ENCODE measurements at regions of chr9 and their contacts with region 1.

Region 1: DNA sequence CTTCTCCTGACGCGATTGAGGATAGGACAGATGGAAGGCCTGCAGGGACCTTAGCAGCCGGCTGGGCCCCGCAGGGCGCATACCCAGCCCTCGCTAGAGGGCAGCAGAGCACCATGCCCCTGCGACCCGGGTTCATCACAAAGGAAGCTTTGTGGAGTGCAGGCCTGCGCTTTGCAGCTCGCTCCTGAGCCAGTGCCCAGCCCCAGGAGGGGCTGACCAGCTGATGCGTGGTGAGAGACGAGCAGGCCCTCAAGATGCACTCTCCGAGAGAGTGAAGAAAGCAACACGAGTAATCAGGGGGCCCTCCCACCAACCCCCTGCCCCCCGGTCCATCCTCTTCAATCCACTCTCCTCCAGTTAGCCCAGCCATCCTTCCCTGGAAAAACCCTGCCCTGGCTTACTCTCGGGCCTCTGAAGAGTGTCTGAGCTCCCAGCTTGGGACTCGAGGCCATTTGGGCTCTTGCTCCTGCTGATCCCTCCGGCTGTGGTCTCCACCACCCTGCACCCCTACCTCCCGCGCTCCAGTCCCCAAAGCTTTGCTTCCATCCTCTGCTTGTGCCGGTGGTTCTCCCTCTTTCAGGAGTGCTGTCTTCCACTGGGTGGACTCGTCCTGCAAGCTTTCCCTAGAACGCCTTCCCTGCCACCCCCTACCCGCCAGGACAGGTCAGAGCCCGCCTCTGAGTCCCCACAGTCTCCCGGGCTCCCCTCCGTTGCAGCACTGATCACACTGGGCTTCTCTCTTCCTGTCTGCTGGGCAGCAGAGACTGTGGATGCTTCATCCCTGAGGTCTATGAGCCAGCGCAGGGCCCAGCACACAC is 9.1 kb upstream of the KIF12 start:
- DNase-seq: peak; percentile 80 to 93
- H3K4me3 ChIP-seq: no peak overlapping the region
- H3K27ac ChIP-seq: no peak overlapping the region
- H3K4me1 ChIP-seq: peaks cover 0 to 9% (median 7%) of the 10 kb centered on the region in 4 experiments; a peak in 6 of 7 replicates
- H3K27me3 ChIP-seq: peaks cover 0 to 15% (median 4%) of the 10 kb centered on the region in 4 experiments; a peak in 3 of 7 replicates
- CTCF ChIP-seq: peak; percentile 98 to 99 (median 98)
- EP300 ChIP-seq: no peak
- POLR2A ChIP-seq: no peak
- RAD21 ChIP-seq: peak; percentile 99

Region 2: DNA sequence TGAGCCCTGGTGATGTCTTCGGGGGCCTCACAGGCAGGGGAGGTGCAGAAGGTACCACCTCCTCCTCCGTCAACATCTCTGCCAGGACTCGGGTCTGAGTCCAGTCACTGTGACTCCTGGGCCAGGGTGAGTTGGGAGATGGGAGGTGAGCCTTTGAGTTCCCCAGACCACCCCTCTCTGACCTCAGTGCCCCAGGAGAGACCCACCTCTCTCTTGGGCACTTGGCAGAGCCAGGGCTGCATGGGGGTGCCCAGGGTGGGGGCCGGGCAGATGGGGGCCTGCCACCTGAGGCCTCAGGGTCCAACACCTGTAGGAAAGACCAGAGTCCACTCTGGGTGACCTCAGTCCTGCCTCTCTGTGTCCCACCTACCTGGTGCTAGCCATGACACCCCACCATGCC is 15.9 kb before region 1 on chr9:
- CTCF ChIA-PET with region 1: interaction called, 49 read pairs
- POLR2A ChIA-PET with region 1: interaction called, 4 read pairs
- DNase-seq: no peak
- H3K4me3 ChIP-seq: no peak overlapping the region
- H3K27ac ChIP-seq: no peak overlapping the region
- H3K4me1 ChIP-seq: no peaks in the 10 kb centered on the region; a peak in 2 of 7 replicates
- H3K27me3 ChIP-seq: peaks cover 0 to 5% (median under 1%) of the 10 kb centered on the region in 4 experiments; a peak in 2 of 7 replicates
- CTCF ChIP-seq: no peak
- EP300 ChIP-seq: no peak
- POLR2A ChIP-seq: no peak
- RAD21 ChIP-seq: no peak

Region 3: GRCh38 chr9:114155263-114155972 is 47.2 kb after region 1 on chr9 and contains the start of gene COL27A1:
- CTCF ChIA-PET with region 1: interaction called, 114 read pairs
- POLR2A ChIA-PET with region 1: interaction called, 6 read pairs
- DNase-seq: peak; percentile 49 to 98
- H3K4me3 ChIP-seq: peak within 1 kb of the TSS; percentile 49 to 86 (median 70)
- H3K27ac ChIP-seq: no peak within 1 kb of the TSS
- H3K4me1 ChIP-seq: peaks cover 0 to 14% (median 11%) of the 10 kb centered on the region in 4 experiments; a peak in 6 of 7 replicates
- H3K27me3 ChIP-seq: peaks cover 4 to 26% (median 21%) of the 10 kb centered on the region in 4 experiments
- CTCF ChIP-seq: peak in 2 of 3 experiments; percentile 82 to 87; a peak in 3 of 4 replicates
- EP300 ChIP-seq: no peak
- POLR2A ChIP-seq: no peak
- RAD21 ChIP-seq: peak; percentile 71 to 81
- total RNA-seq, gene COL27A1: 22.5 and 22.8 TPM in 2 replicates

Region 4: GRCh38 chr9:114224247-114224610 is 116.0 kb after region 1 on chr9:
- CTCF ChIA-PET with region 1: interaction called, 11 read pairs
- POLR2A ChIA-PET with region 1: no interaction called
- DNase-seq: no peak
- H3K4me3 ChIP-seq: no peak overlapping the region
- H3K27ac ChIP-seq: no peak overlapping the region
- H3K4me1 ChIP-seq: peaks cover 0 to 10% (median 1%) of the 10 kb centered on the region in 4 experiments; a peak in 3 of 7 replicates
- H3K27me3 ChIP-seq: no peaks in the 10 kb centered on the region
- CTCF ChIP-seq: no peak
- EP300 ChIP-seq: no peak
- POLR2A ChIP-seq: no peak
- RAD21 ChIP-seq: no peak

Region 5: GRCh38 chr9:114271641-114272081 is 163.4 kb after region 1 on chr9:
- CTCF ChIA-PET with region 1: interaction called, 206 read pairs
- POLR2A ChIA-PET with region 1: interaction called, 4 read pairs
- DNase-seq: peak in 1 of 2 experiments; percentile 80
- H3K4me3 ChIP-seq: no peak overlapping the region
- H3K27ac ChIP-seq: no peak overlapping the region
- H3K4me1 ChIP-seq: no peaks in the 10 kb centered on the region
- H3K27me3 ChIP-seq: no peaks in the 10 kb centered on the region
- CTCF ChIP-seq: peak; percentile 66 to 69 (median 66)
- EP300 ChIP-seq: no peak
- POLR2A ChIP-seq: no peak
- RAD21 ChIP-seq: peak; percentile 70 to 77